Endothelial cell of umbilical vein (primary cell): ENCODE measurements at regions of chr13 and their contacts with region 1.

Region 1: GRCh38 chr13:71625694-71626093 is 241.3 kb downstream of the DACH1 start:
- DNase-seq: peak; percentile 93
- H3K4me3 ChIP-seq: peak overlapping the region in 1 of 3 experiments; percentile 45
- H3K27ac ChIP-seq: peak overlapping the region; percentile 83
- H3K4me1 ChIP-seq: peaks cover 56% of the 10 kb centered on the region
- H3K27me3 ChIP-seq: no peaks in the 10 kb centered on the region
- CTCF ChIP-seq: no peak
- POLR2A ChIP-seq: no peak

Region 2: DNA sequence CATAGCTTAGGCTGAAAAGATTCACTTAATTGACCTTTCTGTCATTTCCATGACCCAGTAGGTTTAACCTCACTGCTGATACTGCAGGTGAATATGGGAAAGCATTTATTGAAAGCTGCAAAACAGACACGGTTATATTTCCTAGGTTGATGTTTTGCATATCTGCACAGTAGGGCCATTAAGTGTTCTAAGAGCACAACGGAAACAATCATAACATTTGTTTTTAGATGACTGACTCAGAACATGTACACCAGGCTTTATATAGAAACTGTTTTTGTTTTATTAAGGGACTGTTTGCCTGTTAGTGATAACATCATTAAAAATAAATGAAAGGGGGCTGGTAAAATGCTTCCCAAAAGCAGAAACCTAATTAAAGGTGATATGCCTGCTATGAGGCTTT is 126.5 kb before region 1 on chr13:
- CTCF ChIA-PET with region 1: no interaction called
- POLR2A ChIA-PET with region 1: no interaction called
- dilution Hi-C with region 1: no loop called
- intact Hi-C with region 1: loop called (anchors 5 kb)
- DNase-seq: peak; percentile 81
- H3K4me3 ChIP-seq: no peak overlapping the region
- H3K27ac ChIP-seq: no peak overlapping the region
- H3K4me1 ChIP-seq: peaks cover 27% of the 10 kb centered on the region
- H3K27me3 ChIP-seq: no peaks in the 10 kb centered on the region
- CTCF ChIP-seq: no peak
- POLR2A ChIP-seq: no peak

Region 3: GRCh38 chr13:71661921-71662320 is 36.2 kb after region 1 on chr13:
- CTCF ChIA-PET with region 1: no interaction called
- POLR2A ChIA-PET with region 1: no interaction called
- dilution Hi-C with region 1: no loop called
- intact Hi-C with region 1: loop called (anchors 1 kb)
- DNase-seq: peak; percentile 92
- H3K4me3 ChIP-seq: no peak overlapping the region
- H3K27ac ChIP-seq: no peak overlapping the region
- H3K4me1 ChIP-seq: peaks cover 15% of the 10 kb centered on the region
- H3K27me3 ChIP-seq: no peaks in the 10 kb centered on the region
- CTCF ChIP-seq: no peak
- POLR2A ChIP-seq: no peak

Region 4: GRCh38 chr13:71770710-71771109 is 145.0 kb after region 1 on chr13:
- CTCF ChIA-PET with region 1: no interaction called
- POLR2A ChIA-PET with region 1: no interaction called
- dilution Hi-C with region 1: no loop called
- intact Hi-C with region 1: loop called (anchors 5 kb)
- DNase-seq: no peak
- H3K4me3 ChIP-seq: no peak overlapping the region
- H3K27ac ChIP-seq: no peak overlapping the region
- H3K4me1 ChIP-seq: peaks cover under 1% of the 10 kb centered on the region
- H3K27me3 ChIP-seq: no peaks in the 10 kb centered on the region
- CTCF ChIP-seq: no peak
- POLR2A ChIP-seq: no peak

Region 5: GRCh38 chr13:71789693-71790329 is 164.1 kb after region 1 on chr13:
- CTCF ChIA-PET with region 1: no interaction called
- POLR2A ChIA-PET with region 1: no interaction called
- dilution Hi-C with region 1: no loop called
- intact Hi-C with region 1: loop called (anchors 5 kb)
- DNase-seq: peak; percentile 94
- H3K4me3 ChIP-seq: no peak overlapping the region
- H3K27ac ChIP-seq: peak overlapping the region; percentile 61
- H3K4me1 ChIP-seq: peaks cover 17% of the 10 kb centered on the region
- H3K27me3 ChIP-seq: no peaks in the 10 kb centered on the region
- CTCF ChIP-seq: no peak
- POLR2A ChIP-seq: no peak